ENCODE measurements at regions of chr4 and their contacts with region 1.

Region 1: DNA sequence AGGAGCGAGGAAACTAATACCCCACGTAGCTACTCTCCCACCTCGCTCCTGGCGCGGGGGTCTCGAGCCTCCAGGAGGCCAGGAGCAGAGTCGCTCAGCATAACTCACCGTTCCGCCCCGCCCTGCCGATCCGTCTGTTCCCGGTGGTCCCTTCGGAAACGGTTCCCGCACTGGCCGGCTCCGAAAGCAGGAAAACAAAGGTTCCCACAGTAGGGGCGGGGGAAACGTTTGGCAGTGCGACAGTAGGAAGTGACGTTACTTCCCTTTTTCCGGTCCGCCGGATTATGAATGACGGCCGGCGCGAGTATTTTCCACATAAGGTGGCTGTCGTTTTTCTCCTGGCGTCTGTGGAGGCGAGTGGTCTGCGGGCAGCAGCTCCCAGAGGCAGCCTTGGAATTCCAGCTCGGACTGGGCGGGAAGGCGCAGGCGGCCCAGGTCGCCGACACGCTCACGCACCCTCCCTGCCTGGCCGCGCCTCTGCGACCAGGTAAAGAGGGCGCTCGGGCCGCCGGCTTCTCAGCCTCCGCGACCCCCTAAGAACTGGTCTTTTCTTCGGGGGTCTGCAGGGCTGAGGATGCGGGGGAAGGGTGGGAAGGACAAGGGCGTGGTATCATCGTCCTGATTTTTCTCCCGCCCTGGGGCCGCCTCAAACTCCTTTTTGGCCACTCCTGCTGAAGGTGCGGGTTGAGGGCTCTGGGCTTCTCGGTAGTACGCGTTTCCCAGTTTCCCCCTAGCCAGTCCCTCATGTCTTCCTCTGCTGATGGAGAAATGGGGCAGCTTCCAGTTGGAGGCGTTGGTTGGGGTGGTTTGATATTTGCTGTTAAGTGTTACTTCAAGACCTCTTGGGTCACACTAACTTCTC is at the starts of genes GSTCD and INTS12:
- DNase-seq: peak; percentile 83
- ATAC-seq: peak; percentile 95
- H3K4me3 Mint-ChIP-seq: peak within 1 kb of the TSS; percentile 99
- H3K27ac Mint-ChIP-seq: peak within 1 kb of the TSS; percentile 94
- H3K4me1 Mint-ChIP-seq: peaks cover 28% of the 10 kb centered on the region
- H3K27me3 Mint-ChIP-seq: no peaks in the 10 kb centered on the region
- CTCF ChIP-seq: no peak
- total RNA-seq, gene GSTCD: 11.3 and 12.3 TPM in 2 replicates
- total RNA-seq, gene INTS12: 18.6 and 20.6 TPM in 2 replicates

Region 2: DNA sequence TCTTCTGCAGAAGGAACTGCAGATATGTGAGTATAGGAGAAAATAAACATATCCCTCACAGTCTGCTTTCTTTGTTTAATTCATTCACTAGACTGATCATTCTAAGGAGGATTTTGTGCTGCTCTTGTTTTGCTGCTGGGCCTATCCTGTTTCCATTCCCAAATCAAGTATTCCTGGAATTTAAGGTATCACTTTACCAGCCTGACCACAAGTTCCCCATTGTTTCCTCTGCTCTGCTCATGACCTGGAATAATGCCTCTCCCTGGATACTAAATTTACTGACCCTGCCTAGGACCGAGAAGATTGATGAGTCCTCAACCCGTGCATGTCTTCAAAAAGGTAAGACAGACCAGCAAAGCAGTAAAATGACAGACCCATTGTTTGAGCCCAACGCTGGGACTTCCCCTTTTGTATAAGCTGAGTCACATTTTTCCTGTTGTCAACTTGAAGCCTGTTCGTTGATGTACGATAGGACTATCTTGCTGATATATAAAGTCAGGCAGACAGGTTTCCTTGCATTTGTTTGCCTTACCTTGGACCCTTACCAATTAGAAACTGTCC is 647.5 kb before region 1 on chr4:
- CTCF ChIA-PET with region 1: no interaction called
- POLR2A ChIA-PET with region 1: no interaction called
- intact Hi-C with region 1: loop called (anchors 2 kb)
- DNase-seq: no peak
- ATAC-seq: peak; percentile 43
- H3K4me3 Mint-ChIP-seq: peak overlapping the region; percentile 74
- H3K27ac Mint-ChIP-seq: peak overlapping the region; percentile 87
- H3K4me1 Mint-ChIP-seq: peaks cover 46% of the 10 kb centered on the region
- H3K27me3 Mint-ChIP-seq: no peaks in the 10 kb centered on the region
- CTCF ChIP-seq: no peak

Region 3: GRCh38 chr4:105306158-105306781 is 402.5 kb before region 1 on chr4:
- CTCF ChIA-PET with region 1: no interaction called
- POLR2A ChIA-PET with region 1: no interaction called
- intact Hi-C with region 1: loop called (anchors 2 kb)
- DNase-seq: no peak
- ATAC-seq: peak; percentile 93
- H3K4me3 Mint-ChIP-seq: peak overlapping the region; percentile 74
- H3K27ac Mint-ChIP-seq: peak overlapping the region; percentile 90
- H3K4me1 Mint-ChIP-seq: peaks cover 22% of the 10 kb centered on the region
- H3K27me3 Mint-ChIP-seq: no peaks in the 10 kb centered on the region
- CTCF ChIP-seq: no peak

Region 4: GRCh38 chr4:105509291-105509690 is 199.5 kb before region 1 on chr4:
- CTCF ChIA-PET with region 1: no interaction called
- POLR2A ChIA-PET with region 1: no interaction called
- intact Hi-C with region 1: loop called (anchors 2 kb)
- DNase-seq: no peak
- ATAC-seq: peak; percentile 94
- H3K4me3 Mint-ChIP-seq: no peak overlapping the region
- H3K27ac Mint-ChIP-seq: no peak overlapping the region
- H3K4me1 Mint-ChIP-seq: peaks cover 12% of the 10 kb centered on the region
- H3K27me3 Mint-ChIP-seq: peaks cover 2% of the 10 kb centered on the region
- CTCF ChIP-seq: no peak

Region 5: DNA sequence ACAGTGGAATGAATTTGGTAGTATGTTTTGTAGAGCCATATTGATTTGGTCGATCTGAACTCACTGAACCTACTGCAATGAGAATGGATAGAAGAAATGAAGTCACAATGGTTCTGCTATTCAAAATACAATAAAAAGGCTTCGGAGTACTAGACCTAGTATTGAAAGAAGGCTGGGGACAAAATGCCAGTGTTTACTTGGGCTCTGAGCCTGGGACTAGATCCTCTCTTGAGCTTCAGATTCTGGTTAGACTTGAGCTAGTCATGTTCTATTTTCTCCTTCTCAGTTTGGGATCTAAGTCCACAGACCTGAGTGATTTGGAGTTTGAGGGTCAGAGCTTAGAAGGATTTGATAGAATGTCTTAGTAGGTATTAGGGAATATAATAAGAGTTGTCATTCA is 10.2 kb before region 1 on chr4:
- CTCF ChIA-PET with region 1: no interaction called
- POLR2A ChIA-PET with region 1: interaction called, 5 read pairs
- intact Hi-C with region 1: loop called (anchors 1 kb)
- DNase-seq: no peak
- ATAC-seq: no peak
- H3K4me3 Mint-ChIP-seq: no peak overlapping the region
- H3K27ac Mint-ChIP-seq: no peak overlapping the region
- H3K4me1 Mint-ChIP-seq: no peaks in the 10 kb centered on the region
- H3K27me3 Mint-ChIP-seq: no peaks in the 10 kb centered on the region
- CTCF ChIP-seq: no peak

Region 6: GRCh38 chr4:105748222-105748621 is 39.5 kb after region 1 on chr4:
- CTCF ChIA-PET with region 1: no interaction called
- POLR2A ChIA-PET with region 1: no interaction called
- intact Hi-C with region 1: no loop called
- DNase-seq: no peak
- ATAC-seq: no peak
- H3K4me3 Mint-ChIP-seq: no peak overlapping the region
- H3K27ac Mint-ChIP-seq: no peak overlapping the region
- H3K4me1 Mint-ChIP-seq: no peaks in the 10 kb centered on the region
- H3K27me3 Mint-ChIP-seq: no peaks in the 10 kb centered on the region
- CTCF ChIP-seq: no peak

Region 7: DNA sequence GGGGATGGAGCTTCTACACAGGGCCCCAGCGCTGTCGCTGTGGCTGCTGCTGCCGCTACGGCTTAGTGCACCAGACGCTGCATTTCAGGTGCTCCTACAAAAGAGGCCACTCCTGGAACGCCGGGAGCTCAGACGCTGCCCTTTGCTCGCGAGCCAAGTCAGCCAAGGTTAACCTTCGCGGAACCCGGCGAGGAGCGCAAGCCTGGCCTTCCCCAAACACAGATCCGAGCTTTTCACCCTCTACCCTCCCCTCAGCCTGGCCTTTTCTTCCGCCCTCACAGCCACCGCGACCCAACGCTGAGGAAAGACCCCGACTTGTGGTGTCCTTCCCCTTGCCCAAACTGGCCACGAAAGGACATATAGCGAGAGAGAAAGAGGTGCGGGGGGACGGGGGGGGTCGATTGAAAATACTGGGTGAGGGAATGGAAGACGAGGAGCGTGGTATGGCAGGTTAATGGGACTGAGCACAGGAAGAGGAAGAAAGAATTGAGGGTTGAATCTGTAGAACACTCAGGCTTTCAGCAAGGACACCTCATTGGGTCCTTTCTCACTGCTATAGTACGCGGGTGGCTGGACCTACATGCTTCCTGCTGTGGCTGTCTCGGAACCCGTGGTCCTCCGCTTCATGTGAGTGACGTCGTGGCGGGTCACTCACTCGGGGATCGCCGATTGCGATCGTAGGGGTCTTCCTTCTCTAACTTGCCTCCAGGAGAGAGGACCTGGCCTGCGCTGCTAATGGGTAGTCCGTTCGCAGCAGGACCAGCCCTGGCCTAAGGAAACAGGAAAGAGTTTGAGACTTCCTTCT is 607.4 kb after region 1 on chr4 and contains the starts of genes AIMP1 and TBCK:
- CTCF ChIA-PET with region 1: no interaction called
- POLR2A ChIA-PET with region 1: no interaction called
- intact Hi-C with region 1: loop called (anchors 1 kb)
- DNase-seq: peak; percentile 78
- ATAC-seq: peak; percentile 90
- H3K4me3 Mint-ChIP-seq: no peak within 1 kb of the TSS
- H3K27ac Mint-ChIP-seq: no peak within 1 kb of the TSS
- H3K4me1 Mint-ChIP-seq: peaks cover 35% of the 10 kb centered on the region
- H3K27me3 Mint-ChIP-seq: no peaks in the 10 kb centered on the region
- CTCF ChIP-seq: no peak
- total RNA-seq, gene AIMP1: 49.4 and 53.5 TPM in 2 replicates
- total RNA-seq, gene TBCK: 45.6 and 60.1 TPM in 2 replicates